T-cell (primary cell): ENCODE measurements at regions of chr20 and their contacts with region 1.

Region 1: GRCh38 chr20:10558635-10559187 is 115.1 kb downstream of the JAG1 start:
- DNase-seq: peak in 21 of 35 experiments; percentile 2 to 58 (median 12)
- ATAC-seq: peak; percentile 71 to 97 (median 75)
- H3K4me3 ChIP-seq: no peak overlapping the region
- H3K4me3 Mint-ChIP-seq: no peak overlapping the region
- H3K27ac ChIP-seq: no peak overlapping the region
- H3K27ac Mint-ChIP-seq: peak overlapping the region in 1 of 2 donors; percentile 54
- H3K4me1 ChIP-seq: peaks cover 3 to 5% of the 10 kb centered on the region in 2 experiments
- H3K4me1 Mint-ChIP-seq: peaks cover 13 to 17% (median 15%) of the 10 kb centered on the region in 3 donors
- H3K27me3 ChIP-seq: no peaks in the 10 kb centered on the region
- H3K27me3 Mint-ChIP-seq: no peaks in the 10 kb centered on the region

Region 2: GRCh38 chr20:10487142-10488136 is 71.3 kb before region 1 on chr20:
- CTCF ChIA-PET with region 1: no interaction called
- POLR2A ChIA-PET with region 1: no interaction called
- DNase-seq: no peak
- ATAC-seq: no peak
- H3K4me3 ChIP-seq: no peak overlapping the region
- H3K4me3 Mint-ChIP-seq: no peak overlapping the region
- H3K27ac ChIP-seq: no peak overlapping the region
- H3K27ac Mint-ChIP-seq: no peak overlapping the region
- H3K4me1 ChIP-seq: no peaks in the 10 kb centered on the region
- H3K4me1 Mint-ChIP-seq: peaks cover 12 to 24% (median 23%) of the 10 kb centered on the region in 3 donors
- H3K27me3 ChIP-seq: no peaks in the 10 kb centered on the region
- H3K27me3 Mint-ChIP-seq: no peaks in the 10 kb centered on the region

Region 3: DNA sequence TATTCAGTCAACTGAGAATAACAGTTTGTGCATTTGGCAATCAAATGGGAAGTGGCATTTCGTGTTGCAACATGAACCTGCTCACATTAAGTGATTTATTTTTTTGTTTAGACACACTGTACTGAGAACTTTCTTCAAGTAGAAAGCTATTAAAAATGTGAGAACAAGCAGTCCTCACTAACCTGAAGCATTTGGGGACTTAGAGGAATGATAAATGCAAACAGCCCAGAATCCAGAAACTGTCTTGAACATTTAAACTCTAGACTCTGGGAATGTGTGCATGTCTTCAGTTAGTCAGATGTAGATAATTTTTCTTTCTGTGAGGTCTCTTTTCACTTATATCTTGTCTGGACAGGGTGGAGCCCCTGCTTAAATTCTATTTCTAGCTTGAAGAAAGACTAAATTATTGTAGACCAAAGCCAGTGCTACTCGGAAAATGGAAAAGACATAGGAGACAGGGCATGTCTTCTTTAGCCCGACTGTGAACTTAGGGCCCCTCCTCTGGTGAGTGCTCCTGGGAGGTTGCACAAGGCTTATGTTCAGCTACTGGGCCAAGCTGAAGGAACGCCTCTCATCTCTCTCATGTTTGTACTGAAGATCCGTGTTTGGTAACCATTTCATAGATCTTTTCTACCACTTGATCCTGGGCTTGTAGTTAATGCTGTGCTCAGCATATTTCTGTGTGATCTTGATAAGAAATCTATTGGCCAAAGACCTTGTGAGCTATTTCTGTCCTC is 53.5 kb before region 1 on chr20:
- CTCF ChIA-PET with region 1: no interaction called
- POLR2A ChIA-PET with region 1: no interaction called
- DNase-seq: no peak
- ATAC-seq: no peak
- H3K4me3 ChIP-seq: no peak overlapping the region
- H3K4me3 Mint-ChIP-seq: no peak overlapping the region
- H3K27ac ChIP-seq: no peak overlapping the region
- H3K27ac Mint-ChIP-seq: no peak overlapping the region
- H3K4me1 ChIP-seq: peaks cover 3 to 12% of the 10 kb centered on the region in 2 experiments
- H3K4me1 Mint-ChIP-seq: peaks cover 23 to 35% (median 26%) of the 10 kb centered on the region in 3 donors
- H3K27me3 ChIP-seq: no peaks in the 10 kb centered on the region
- H3K27me3 Mint-ChIP-seq: no peaks in the 10 kb centered on the region

Region 4: DNA sequence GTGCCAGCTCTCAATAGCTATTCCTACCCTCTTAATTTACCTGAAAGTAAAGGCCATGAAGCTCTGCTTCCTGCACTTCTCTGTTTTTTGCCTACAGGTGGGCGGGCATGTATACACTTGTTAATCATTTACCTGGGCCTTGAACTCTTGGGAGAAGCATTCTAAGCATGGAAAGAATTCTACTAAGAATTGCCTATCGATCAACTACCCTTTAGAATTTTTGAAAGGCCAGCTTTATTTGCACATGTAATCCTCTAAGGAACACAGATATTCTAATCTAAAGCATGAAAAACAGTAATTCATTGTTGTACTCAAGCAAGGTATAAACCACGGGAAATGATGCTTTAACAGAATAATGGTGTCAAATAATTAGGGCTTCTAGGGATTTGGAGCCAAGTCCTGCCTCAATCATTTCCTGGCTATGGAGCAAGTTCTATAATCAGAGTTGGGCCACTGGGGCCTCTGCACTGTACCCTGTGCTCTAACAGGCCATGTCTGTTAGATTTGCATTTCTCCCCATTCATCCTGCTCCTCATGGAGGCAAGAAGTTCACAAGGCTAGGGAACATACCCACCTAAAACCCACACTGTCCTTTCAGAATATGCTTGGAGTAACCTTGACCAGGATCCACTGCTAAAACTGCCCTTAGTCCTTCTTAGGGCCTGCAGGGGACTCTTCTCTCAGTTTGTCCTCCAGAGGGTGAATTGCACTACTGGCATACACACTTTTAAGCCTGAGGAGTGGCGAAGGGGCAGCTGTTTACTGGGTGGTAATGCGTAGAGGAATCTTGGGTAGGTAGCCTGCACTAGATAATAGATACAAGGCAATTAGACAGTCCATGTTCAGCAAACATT is 391.4 kb after region 1 on chr20:
- CTCF ChIA-PET with region 1: no interaction called
- POLR2A ChIA-PET with region 1: interaction called in 1 of 2 experiments, 10 read pairs
- DNase-seq: no peak
- ATAC-seq: no peak
- H3K4me3 ChIP-seq: no peak overlapping the region
- H3K4me3 Mint-ChIP-seq: no peak overlapping the region
- H3K27ac ChIP-seq: no peak overlapping the region
- H3K27ac Mint-ChIP-seq: no peak overlapping the region
- H3K4me1 ChIP-seq: no peaks in the 10 kb centered on the region
- H3K4me1 Mint-ChIP-seq: no peaks in the 10 kb centered on the region
- H3K27me3 ChIP-seq: no peaks in the 10 kb centered on the region
- H3K27me3 Mint-ChIP-seq: no peaks in the 10 kb centered on the region